Naive thymus-derived CD4-positive, alpha-beta T cell (primary cell): ENCODE measurements at regions of chr15 and their contacts with region 1.

Region 1: DNA sequence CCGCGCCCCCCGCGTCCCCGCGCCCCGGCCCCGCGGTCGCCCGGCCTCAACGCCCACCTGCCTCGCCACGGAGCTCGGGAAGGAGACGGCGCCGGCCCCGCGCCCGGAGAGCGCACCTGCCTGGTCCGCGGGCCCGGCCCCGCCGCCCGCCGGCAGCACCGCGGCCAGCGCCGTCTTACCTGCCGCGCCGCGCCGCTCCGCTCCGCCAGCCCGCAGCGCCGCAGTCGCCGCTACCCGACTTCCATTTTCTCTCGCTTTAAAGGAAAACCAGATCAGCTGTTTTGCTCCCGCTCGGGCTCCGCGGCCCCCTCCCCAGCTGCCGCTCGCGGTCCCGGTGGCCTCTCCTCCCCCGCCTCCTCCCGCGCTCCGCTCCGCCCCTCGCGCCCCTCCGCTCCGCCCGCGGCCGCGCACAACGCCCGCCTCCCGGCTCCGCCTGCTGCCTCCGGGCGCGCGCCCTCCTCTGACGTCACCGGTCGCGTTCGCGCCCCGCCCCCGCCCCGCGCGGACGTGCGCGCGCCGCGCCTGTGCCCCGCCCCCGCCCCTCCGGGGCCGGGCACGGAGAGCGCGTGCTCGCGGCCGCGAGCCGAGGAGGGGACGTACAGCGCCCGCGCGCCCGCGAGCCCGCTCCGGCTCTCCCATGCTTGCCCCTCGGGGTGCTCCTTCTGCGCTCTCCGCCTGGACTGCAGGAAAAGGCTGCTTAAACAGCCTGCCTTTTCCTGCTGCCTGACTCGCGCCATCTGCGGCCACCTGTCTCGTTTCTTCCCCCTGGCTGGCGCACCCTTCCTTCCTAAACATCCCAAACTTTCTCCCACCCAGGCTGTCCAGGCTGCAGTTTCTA is 159.8 kb upstream of the CHRNA7 start:
- DNase-seq: peak; percentile 78 to 92 (median 89)
- ATAC-seq: peak; percentile 94
- H3K4me3 ChIP-seq: peak within 1 kb of the TSS; percentile 72
- H3K4me3 Mint-ChIP-seq: peak within 1 kb of the TSS; percentile 90 to 98 (median 95)
- H3K27ac ChIP-seq: peak within 1 kb of the TSS; percentile 62
- H3K27ac Mint-ChIP-seq: peak within 1 kb of the TSS; percentile 59 to 98 (median 92)
- H3K4me1 ChIP-seq: peaks cover 5 to 7% of the 10 kb centered on the region in 2 donors
- H3K4me1 Mint-ChIP-seq: peaks cover 11 to 23% (median 14%) of the 10 kb centered on the region in 7 donors
- H3K27me3 ChIP-seq: no peaks in the 10 kb centered on the region
- H3K27me3 Mint-ChIP-seq: peaks cover 4 to 56% (median 11%) of the 10 kb centered on the region in 5 donors

Region 2: GRCh38 chr15:31200735-31201151 is 669.8 kb before region 1 on chr15:
- CTCF ChIA-PET with region 1: no interaction called
- POLR2A ChIA-PET with region 1: no interaction called
- intact Hi-C with region 1: loop called in 1 of 2 experiments (anchors 5 kb)
- DNase-seq: peak; percentile 45 to 81 (median 72)
- ATAC-seq: peak; percentile 77
- H3K4me3 ChIP-seq: no peak overlapping the region
- H3K4me3 Mint-ChIP-seq: no peak overlapping the region
- H3K27ac ChIP-seq: no peak overlapping the region
- H3K27ac Mint-ChIP-seq: peak overlapping the region in 3 of 9 donors; percentile 4 to 77 (median 38)
- H3K4me1 ChIP-seq: peaks cover 0 to 31% of the 10 kb centered on the region in 2 donors
- H3K4me1 Mint-ChIP-seq: peaks cover 10 to 48% (median 36%) of the 10 kb centered on the region in 7 donors
- H3K27me3 ChIP-seq: no peaks in the 10 kb centered on the region
- H3K27me3 Mint-ChIP-seq: peaks cover 0 to 33% (median 0%) of the 10 kb centered on the region in 5 donors